PC-9 (cell line): ENCODE measurements at regions of chr11 and their contacts with region 1.

Region 1: GRCh38 chr11:129375751-129376657 is at the start of gene BARX2:
- DNase-seq: peak; percentile 73 to 78
- H3K4me3 ChIP-seq: peak within 1 kb of the TSS; percentile 95
- H3K27ac ChIP-seq: peak within 1 kb of the TSS; percentile 90
- H3K4me1 ChIP-seq: peaks cover 33% of the 10 kb centered on the region
- H3K27me3 ChIP-seq: peaks cover 9% of the 10 kb centered on the region; the same call in 1 of the 2 replicates
- CTCF ChIP-seq: peak; percentile 63
- total RNA-seq, gene BARX2: 13.4 and 16.5 TPM in 2 replicates

Region 2: DNA sequence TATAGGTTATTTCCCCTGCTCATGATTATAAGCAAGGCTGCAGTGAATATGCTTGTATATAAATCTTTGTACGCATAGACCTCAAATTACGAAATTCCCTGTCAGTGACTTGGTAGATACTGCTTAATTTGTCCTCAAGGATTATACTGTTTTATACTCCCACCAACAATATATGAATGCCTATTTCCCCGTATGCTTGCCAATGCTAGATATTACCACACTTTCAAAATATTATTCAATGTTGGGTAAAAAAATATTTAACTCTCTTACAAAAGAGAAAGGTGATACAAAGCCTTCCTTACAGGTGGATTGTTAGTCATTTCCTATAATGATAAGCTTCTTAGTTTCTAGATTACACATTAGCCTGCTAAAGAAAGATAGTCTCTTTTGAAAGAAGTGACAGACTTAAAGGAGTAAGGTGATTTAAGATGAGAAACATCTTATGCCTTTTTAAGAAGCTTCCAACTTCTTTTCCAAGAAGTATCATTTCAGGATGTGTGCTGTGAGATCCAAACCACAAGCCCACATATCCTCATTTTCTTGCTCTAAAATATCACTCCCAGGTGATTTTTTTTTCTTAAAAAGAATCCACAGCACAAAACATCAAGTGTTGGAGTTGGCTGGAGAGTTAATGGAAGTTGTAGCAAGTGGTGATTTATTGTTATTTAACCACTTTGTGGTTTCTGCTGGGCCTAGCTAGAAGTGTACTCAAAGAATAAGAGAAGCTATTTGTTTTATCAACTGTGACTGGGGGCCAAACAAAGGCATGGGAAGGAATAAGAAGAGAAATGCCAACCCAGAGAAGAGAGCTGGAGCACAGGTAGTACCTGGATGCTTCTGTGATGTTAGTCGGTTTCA is 58.9 kb after region 1 on chr11:
- CTCF ChIA-PET with region 1: interaction called, 11 read pairs
- POLR2A ChIA-PET with region 1: interaction called, 9 read pairs
- intact Hi-C with region 1: loop called (anchors 2 kb)
- DNase-seq: peak in 1 of 2 experiments; percentile 94
- H3K4me3 ChIP-seq: no peak overlapping the region
- H3K27ac ChIP-seq: peak overlapping the region; percentile 81
- H3K4me1 ChIP-seq: peaks cover 35% of the 10 kb centered on the region
- H3K27me3 ChIP-seq: no peaks in the 10 kb centered on the region
- CTCF ChIP-seq: no peak

Region 3: GRCh38 chr11:129504956-129505665 is 129.1 kb after region 1 on chr11:
- CTCF ChIA-PET with region 1: no interaction called
- POLR2A ChIA-PET with region 1: no interaction called
- intact Hi-C with region 1: loop called (anchors 10 kb)
- DNase-seq: peak in 1 of 2 experiments; percentile 70
- H3K4me3 ChIP-seq: no peak overlapping the region
- H3K27ac ChIP-seq: no peak overlapping the region
- H3K4me1 ChIP-seq: peaks cover 31% of the 10 kb centered on the region
- H3K27me3 ChIP-seq: no peaks in the 10 kb centered on the region
- CTCF ChIP-seq: no peak

Region 4: DNA sequence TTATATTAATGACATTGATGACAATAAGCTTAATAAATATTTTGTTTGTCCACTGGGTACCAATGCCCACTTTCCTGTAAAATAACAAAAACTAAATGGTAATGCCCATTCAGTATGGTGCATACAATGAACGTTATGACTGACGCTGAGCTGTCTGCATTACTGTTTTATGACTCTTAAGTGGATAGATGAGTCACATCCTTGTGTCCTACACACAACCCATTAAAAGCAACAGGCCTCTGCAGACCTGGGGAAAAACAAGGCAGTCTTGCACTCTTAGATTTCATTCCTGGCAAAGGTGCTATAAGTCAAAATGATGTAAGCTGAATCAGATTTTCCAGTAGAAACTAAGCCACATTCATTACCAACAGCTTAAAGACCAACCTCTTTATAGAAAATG is 263.3 kb after region 1 on chr11:
- CTCF ChIA-PET with region 1: no interaction called
- POLR2A ChIA-PET with region 1: no interaction called
- intact Hi-C with region 1: loop called (anchors 2 kb)
- DNase-seq: peak; percentile 49 to 97
- H3K4me3 ChIP-seq: no peak overlapping the region
- H3K27ac ChIP-seq: peak overlapping the region; percentile 92
- H3K4me1 ChIP-seq: peaks cover 72% of the 10 kb centered on the region
- H3K27me3 ChIP-seq: no peaks in the 10 kb centered on the region
- CTCF ChIP-seq: no peak

Region 5: DNA sequence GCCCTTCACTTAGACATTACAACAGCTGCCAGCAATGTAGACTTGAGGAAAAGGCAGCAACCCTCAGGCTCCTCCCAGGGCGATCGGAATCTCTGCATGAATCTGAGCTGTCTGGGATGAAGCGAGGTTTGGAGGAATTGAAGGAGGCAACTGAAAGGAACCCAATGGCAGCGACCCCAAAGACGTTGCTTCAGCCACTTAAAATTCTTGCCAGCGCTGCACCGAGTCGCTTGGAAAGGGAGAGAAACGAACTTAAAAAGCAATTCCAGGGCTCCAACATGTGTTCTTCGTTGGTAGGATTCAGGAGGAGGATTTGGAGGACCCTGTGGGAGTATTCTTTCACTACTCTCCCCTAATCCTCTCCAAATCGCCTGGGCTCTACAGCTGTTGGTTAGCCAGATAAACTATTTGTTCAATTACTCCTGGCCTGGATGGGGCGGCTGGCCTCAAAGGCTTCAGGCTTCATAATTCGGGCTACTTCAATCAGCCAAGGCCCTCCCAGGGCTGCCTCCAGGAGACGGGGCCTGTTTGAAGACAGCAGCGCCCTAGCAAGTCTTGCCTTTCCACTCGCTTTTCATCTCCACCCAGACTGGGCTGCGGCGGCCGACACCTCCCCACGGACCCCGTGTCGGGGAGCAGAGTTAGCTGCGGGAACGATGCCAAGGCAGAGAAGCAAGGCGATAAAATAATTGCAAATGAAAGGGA is 367.3 kb after region 1 on chr11:
- CTCF ChIA-PET with region 1: no interaction called
- POLR2A ChIA-PET with region 1: no interaction called
- intact Hi-C with region 1: loop called (anchors 2 kb)
- DNase-seq: no peak
- H3K4me3 ChIP-seq: no peak overlapping the region
- H3K27ac ChIP-seq: no peak overlapping the region
- H3K4me1 ChIP-seq: peaks cover 20% of the 10 kb centered on the region
- H3K27me3 ChIP-seq: no peaks in the 10 kb centered on the region
- CTCF ChIP-seq: no peak